Activated T-helper 2 cell treated with anti-CD3 and anti-CD28 coated beads, Interferon-gamma antibody, Interleukin-2, Interleukin-4, amounts not matched to agents 10 μg/mL and 5 μg/mL and 100 μg/mL, durations not matched to agents 14 hours and 24 hours and 36 hours (primary cell): ENCODE measurements at regions of chr16 and their contacts with region 1.

Region 1: DNA sequence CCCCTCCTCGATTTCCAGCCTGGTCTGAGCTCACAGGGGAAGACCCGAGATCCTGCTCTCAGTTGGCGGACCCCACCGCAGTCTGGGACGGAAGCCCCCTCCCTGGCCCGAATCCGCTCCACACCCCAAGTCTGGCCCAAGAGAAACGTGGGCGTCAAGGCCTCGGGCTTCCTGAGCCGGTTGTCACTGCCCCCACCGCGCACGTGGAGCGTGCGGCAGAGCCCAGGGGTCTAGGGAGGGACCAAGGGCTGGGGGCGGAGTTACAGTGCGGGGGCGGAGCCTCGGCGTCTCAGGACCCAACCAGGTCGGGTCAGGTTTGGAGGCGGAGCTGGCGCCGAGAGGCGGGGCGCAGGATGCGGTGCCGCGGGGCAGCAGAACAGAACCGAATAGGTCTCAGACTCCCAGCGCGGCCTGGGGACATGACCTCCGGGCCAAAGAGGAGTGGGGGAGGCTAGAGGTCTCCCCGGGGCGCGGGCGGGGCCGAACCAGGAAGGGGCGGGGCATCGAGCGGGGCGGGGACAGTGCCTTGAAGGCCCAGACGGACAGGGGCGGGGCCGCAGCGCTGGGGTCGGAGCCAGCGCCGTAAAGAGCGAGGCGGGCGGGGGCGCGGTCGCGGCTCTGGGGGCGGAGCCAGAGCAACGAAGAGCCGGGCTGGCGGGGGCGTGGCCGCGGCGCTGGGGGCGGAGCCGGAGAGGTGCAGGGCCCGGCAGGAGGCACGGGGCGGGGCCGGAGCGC is 431 bp upstream of the ZFPM1 start:
- DNase-seq: peak; percentile 97
- H3K4me3 Mint-ChIP-seq: peak overlapping the region; percentile 81
- H3K27ac Mint-ChIP-seq: peak overlapping the region; percentile 80
- H3K4me1 Mint-ChIP-seq: peaks cover 22% of the 10 kb centered on the region
- H3K27me3 Mint-ChIP-seq: peaks cover 11% of the 10 kb centered on the region

Region 2: GRCh38 chr16:87877938-87878507 is 574.6 kb before region 1 on chr16:
- intact Hi-C with region 1: loop called (anchors 10 kb)
- DNase-seq: peak; percentile 32
- H3K4me3 Mint-ChIP-seq: no peak overlapping the region
- H3K27ac Mint-ChIP-seq: peak overlapping the region; percentile 75
- H3K4me1 Mint-ChIP-seq: peaks cover 52% of the 10 kb centered on the region
- H3K27me3 Mint-ChIP-seq: no peaks in the 10 kb centered on the region

Region 3: GRCh38 chr16:87950765-87951549 is 501.7 kb before region 1 on chr16 and contains the start of gene BANP:
- intact Hi-C with region 1: loop called (anchors 2 kb)
- DNase-seq: peak; percentile 96
- H3K4me3 Mint-ChIP-seq: peak within 1 kb of the TSS; percentile 94
- H3K27ac Mint-ChIP-seq: peak within 1 kb of the TSS; percentile 99
- H3K4me1 Mint-ChIP-seq: peaks cover 46% of the 10 kb centered on the region
- H3K27me3 Mint-ChIP-seq: no peaks in the 10 kb centered on the region
- total RNA-seq, gene BANP: 39.7 and 40.8 TPM in 2 replicates

Region 4: DNA sequence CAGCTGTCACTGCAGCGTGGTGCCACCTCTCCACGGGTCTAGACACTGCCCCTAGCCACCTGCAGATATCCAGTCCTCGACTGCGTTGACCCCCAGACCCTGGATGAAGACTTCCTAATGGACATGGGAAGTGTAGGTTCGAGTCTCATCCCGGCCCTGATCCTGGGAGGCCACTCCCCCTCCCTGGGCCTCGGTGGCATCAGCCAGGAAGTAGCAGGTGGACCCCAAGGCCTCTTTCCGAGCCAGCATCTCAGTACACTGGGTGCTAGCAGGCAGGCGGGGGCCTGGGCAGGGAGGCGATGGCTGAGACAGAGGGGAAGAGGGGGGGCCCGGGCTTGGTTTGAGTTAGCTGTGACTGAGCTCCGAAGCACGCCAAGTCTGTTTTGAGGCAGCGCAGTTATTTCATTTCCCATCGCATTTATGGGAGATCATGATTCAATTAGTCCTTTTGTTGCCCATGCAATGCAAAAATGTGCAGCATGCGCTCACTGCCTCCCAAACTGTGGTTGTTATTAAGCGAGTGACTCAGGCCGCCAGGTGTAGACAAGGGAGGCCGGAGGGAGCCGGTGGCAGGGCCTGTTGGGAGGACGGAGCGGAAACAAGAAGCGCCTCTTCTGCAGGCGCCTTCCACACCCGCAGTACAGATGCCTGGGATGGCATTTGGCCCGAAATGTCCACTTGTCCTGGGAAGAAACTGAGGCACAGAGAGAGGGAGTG is 95.2 kb before region 1 on chr16:
- intact Hi-C with region 1: no loop called
- DNase-seq: no peak
- H3K4me3 Mint-ChIP-seq: no peak overlapping the region
- H3K27ac Mint-ChIP-seq: no peak overlapping the region
- H3K4me1 Mint-ChIP-seq: no peaks in the 10 kb centered on the region
- H3K27me3 Mint-ChIP-seq: no peaks in the 10 kb centered on the region

Region 5: DNA sequence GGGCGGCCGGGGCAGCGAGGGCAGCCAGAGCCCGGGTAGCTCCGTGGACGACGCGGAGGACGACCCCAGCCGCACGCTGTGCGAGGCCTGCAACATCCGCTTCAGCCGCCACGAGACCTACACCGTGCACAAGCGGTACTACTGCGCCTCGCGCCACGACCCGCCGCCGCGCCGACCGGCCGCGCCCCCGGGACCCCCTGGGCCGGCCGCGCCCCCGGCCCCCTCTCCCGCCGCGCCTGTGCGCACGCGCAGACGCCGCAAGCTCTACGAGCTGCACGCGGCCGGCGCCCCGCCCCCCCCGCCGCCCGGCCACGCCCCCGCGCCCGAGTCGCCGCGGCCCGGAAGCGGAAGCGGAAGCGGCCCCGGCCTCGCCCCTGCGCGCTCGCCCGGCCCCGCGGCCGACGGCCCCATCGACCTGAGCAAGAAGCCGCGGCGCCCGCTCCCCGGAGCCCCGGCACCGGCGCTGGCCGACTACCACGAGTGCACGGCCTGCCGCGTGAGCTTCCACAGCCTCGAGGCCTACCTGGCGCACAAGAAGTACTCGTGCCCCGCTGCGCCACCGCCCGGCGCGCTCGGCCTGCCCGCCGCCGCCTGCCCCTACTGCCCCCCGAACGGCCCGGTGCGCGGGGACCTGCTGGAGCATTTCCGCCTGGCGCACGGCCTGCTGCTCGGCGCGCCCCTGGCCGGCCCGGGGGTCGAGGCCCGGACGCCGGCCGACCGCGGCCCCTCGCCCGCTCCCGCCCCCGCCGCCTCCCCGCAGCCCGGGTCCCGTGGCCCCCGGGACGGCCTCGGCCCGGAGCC is 81.5 kb after region 1 on chr16:
- intact Hi-C with region 1: loop called (anchors 2 kb)
- DNase-seq: peak; percentile 75
- H3K4me3 Mint-ChIP-seq: no peak overlapping the region
- H3K27ac Mint-ChIP-seq: no peak overlapping the region
- H3K4me1 Mint-ChIP-seq: peaks cover 3% of the 10 kb centered on the region
- H3K27me3 Mint-ChIP-seq: peaks cover 4% of the 10 kb centered on the region

Region 6: GRCh38 chr16:88650749-88651275 is 198.2 kb after region 1 on chr16 and contains the start of gene CYBA:
- intact Hi-C with region 1: loop called (anchors 2 kb)
- DNase-seq: peak; percentile 86
- H3K4me3 Mint-ChIP-seq: peak within 1 kb of the TSS; percentile 87
- H3K27ac Mint-ChIP-seq: peak within 1 kb of the TSS; percentile 95
- H3K4me1 Mint-ChIP-seq: peaks cover 12% of the 10 kb centered on the region
- H3K27me3 Mint-ChIP-seq: no peaks in the 10 kb centered on the region
- total RNA-seq, gene CYBA: 233 and 242 TPM in 2 replicates